ENCODE measurements at regions of chr6 and their contacts with region 1.

Region 1: GRCh38 chr6:25070547-25071366 is 135.0 kb upstream of the RIPOR2 start:
- DNase-seq: peak; percentile 73
- ATAC-seq: peak; percentile 87
- H3K4me3 Mint-ChIP-seq: peak overlapping the region; percentile 62
- H3K27ac Mint-ChIP-seq: peak overlapping the region; percentile 83
- H3K4me1 Mint-ChIP-seq: peaks cover 4% of the 10 kb centered on the region
- H3K27me3 Mint-ChIP-seq: peaks cover 12% of the 10 kb centered on the region

Region 2: GRCh38 chr6:25027221-25027916 is 43.4 kb before region 1 on chr6:
- POLR2A ChIA-PET with region 1: interaction called, 12 read pairs
- DNase-seq: peak; percentile 72
- ATAC-seq: peak; percentile 98
- H3K4me3 Mint-ChIP-seq: peak overlapping the region; percentile 78
- H3K27ac Mint-ChIP-seq: peak overlapping the region; percentile 82
- H3K4me1 Mint-ChIP-seq: peaks cover 19% of the 10 kb centered on the region
- H3K27me3 Mint-ChIP-seq: no peaks in the 10 kb centered on the region

Region 3: GRCh38 chr6:25089442-25089841 is 18.7 kb after region 1 on chr6:
- POLR2A ChIA-PET with region 1: no interaction called
- DNase-seq: no peak
- ATAC-seq: no peak
- H3K4me3 Mint-ChIP-seq: no peak overlapping the region
- H3K27ac Mint-ChIP-seq: peak overlapping the region; percentile 18
- H3K4me1 Mint-ChIP-seq: peaks cover 12% of the 10 kb centered on the region
- H3K27me3 Mint-ChIP-seq: no peaks in the 10 kb centered on the region

Region 4: DNA sequence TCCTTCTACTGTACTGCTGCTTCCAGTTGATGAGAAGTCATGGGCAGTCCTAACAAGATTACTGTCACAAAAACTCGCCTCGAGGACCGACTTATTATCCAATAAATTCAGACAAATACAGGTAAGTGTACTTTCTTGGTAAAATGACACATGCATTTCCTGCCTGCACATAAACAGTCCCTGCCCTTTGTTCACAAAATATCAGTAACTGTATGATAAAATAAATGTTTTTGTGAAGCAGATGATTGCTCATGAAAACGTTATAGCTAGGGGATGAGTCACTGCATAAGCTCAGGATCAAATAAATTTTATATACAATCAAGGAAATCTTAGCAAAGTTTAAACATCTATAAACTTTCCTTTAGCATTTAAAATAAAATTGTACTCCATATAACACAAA is 29.5 kb after region 1 on chr6:
- POLR2A ChIA-PET with region 1: no interaction called
- DNase-seq: no peak
- ATAC-seq: no peak
- H3K4me3 Mint-ChIP-seq: no peak overlapping the region
- H3K27ac Mint-ChIP-seq: no peak overlapping the region
- H3K4me1 Mint-ChIP-seq: peaks cover 2% of the 10 kb centered on the region
- H3K27me3 Mint-ChIP-seq: no peaks in the 10 kb centered on the region

Measured in activated naive CD8-positive, alpha-beta T cell treated with anti-CD3 and anti-CD28 coated beads, Interleukin-2, amount 10 ng/mL, durations not matched to agents 7 days and 5 days (primary cell).